Natural killer cell (primary cell): ENCODE measurements at regions of chr1 and their contacts with region 1.

Region 1: DNA sequence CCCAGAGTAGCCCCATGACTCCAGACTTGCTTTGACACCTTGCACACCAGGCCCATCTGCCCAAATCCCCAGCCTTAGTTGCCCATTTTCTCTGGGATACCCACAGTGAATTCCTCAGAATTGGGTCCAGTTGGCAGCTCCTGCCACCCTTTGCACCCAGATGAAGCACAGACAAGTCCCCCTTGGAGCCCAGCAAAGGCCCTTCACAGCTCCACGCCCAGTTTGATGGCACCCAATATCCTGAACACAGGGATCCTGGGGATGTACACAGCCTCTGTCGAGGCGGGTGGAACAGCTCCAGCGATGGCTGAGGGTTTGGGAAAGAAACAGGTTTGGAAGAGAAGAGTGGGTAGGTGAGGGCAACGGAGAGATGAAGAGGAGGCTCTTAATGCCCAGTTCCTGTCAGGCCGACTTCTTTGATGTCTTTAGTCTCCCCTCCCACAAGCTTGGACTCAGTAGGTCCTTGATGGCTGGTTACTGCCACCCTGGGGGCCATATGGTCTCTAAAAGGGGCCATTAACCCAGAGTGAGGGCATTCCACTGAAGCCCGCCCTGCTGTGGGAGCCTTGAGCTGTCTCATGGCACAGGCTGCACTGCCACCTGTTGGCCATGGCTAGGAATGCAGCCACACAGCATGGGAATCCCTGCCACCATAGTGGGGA is 21.7 kb downstream of the TMEM53 start:
- DNase-seq: peak; percentile 71 to 87
- ATAC-seq: peak; percentile 91 to 99 (median 97)
- H3K4me3 ChIP-seq: no peak overlapping the region
- H3K4me3 Mint-ChIP-seq: no peak overlapping the region
- H3K27ac ChIP-seq: no peak overlapping the region
- H3K27ac Mint-ChIP-seq: peak overlapping the region; percentile 2 to 29
- H3K4me1 ChIP-seq: peaks cover 2% of the 10 kb centered on the region
- H3K4me1 Mint-ChIP-seq: peaks cover 0 to 5% of the 10 kb centered on the region in 2 donors
- H3K27me3 ChIP-seq: no peaks in the 10 kb centered on the region
- H3K27me3 Mint-ChIP-seq: no peaks in the 10 kb centered on the region
- CTCF ChIP-seq: peak; percentile 92

Region 2: GRCh38 chr1:44377925-44378784 is 274.4 kb before region 1 on chr1:
- intact Hi-C with region 1: loop called (anchors 1 kb)
- DNase-seq: peak; percentile 38 to 74
- ATAC-seq: peak; percentile 59 to 74 (median 62)
- H3K4me3 ChIP-seq: no peak overlapping the region
- H3K4me3 Mint-ChIP-seq: no peak overlapping the region
- H3K27ac ChIP-seq: no peak overlapping the region
- H3K27ac Mint-ChIP-seq: no peak overlapping the region
- H3K4me1 ChIP-seq: no peaks in the 10 kb centered on the region
- H3K4me1 Mint-ChIP-seq: no peaks in the 10 kb centered on the region
- H3K27me3 ChIP-seq: no peaks in the 10 kb centered on the region
- H3K27me3 Mint-ChIP-seq: peaks cover 0 to 6% of the 10 kb centered on the region in 2 donors
- CTCF ChIP-seq: peak; percentile 65

Region 3: GRCh38 chr1:44571712-44572571 is 80.6 kb before region 1 on chr1:
- intact Hi-C with region 1: loop called (anchors 1 kb)
- DNase-seq: peak in 1 of 2 donors; percentile 65
- ATAC-seq: peak in 2 of 3 donors; percentile 48 to 50
- H3K4me3 ChIP-seq: no peak overlapping the region
- H3K4me3 Mint-ChIP-seq: no peak overlapping the region
- H3K27ac ChIP-seq: no peak overlapping the region
- H3K27ac Mint-ChIP-seq: no peak overlapping the region
- H3K4me1 ChIP-seq: no peaks in the 10 kb centered on the region
- H3K4me1 Mint-ChIP-seq: no peaks in the 10 kb centered on the region
- H3K27me3 ChIP-seq: no peaks in the 10 kb centered on the region
- H3K27me3 Mint-ChIP-seq: peaks cover 5 to 6% of the 10 kb centered on the region in 2 donors
- CTCF ChIP-seq: peak; percentile 38